MCF 10A (cell line): ENCODE measurements at regions of chr14 and their contacts with region 1.

Region 1: GRCh38 chr14:53953002-53953827 is 3.4 kb downstream of the BMP4 start:
- DNase-seq: peak; percentile 75
- H3K4me3 Mint-ChIP-seq: peak overlapping the region; percentile 81
- H3K27ac Mint-ChIP-seq: peak overlapping the region; percentile 53
- H3K4me1 Mint-ChIP-seq: peaks cover 8% of the 10 kb centered on the region
- H3K27me3 Mint-ChIP-seq: no peaks in the 10 kb centered on the region
- CTCF ChIP-seq: no peak

Region 2: GRCh38 chr14:53924754-53925153 is 28.5 kb before region 1 on chr14:
- CTCF ChIA-PET with region 1: interaction called, 5 read pairs
- POLR2A ChIA-PET with region 1: interaction called, 15 read pairs
- intact Hi-C with region 1: no loop called
- DNase-seq: peak; percentile 86
- H3K4me3 Mint-ChIP-seq: peak overlapping the region; percentile 30
- H3K27ac Mint-ChIP-seq: peak overlapping the region; percentile 92
- H3K4me1 Mint-ChIP-seq: peaks cover 28% of the 10 kb centered on the region
- H3K27me3 Mint-ChIP-seq: no peaks in the 10 kb centered on the region
- CTCF ChIP-seq: no peak

Region 3: GRCh38 chr14:53943048-53943750 is 10.0 kb before region 1 on chr14:
- CTCF ChIA-PET with region 1: no interaction called
- POLR2A ChIA-PET with region 1: interaction called, 15 read pairs
- intact Hi-C with region 1: no loop called
- DNase-seq: no peak
- H3K4me3 Mint-ChIP-seq: no peak overlapping the region
- H3K27ac Mint-ChIP-seq: peak overlapping the region; percentile 25
- H3K4me1 Mint-ChIP-seq: peaks cover 18% of the 10 kb centered on the region
- H3K27me3 Mint-ChIP-seq: no peaks in the 10 kb centered on the region
- CTCF ChIP-seq: no peak